HEK293 (cell line): ENCODE measurements at regions of chr17 and their contacts with region 1.

Region 1: GRCh38 chr17:10618202-10618635 is 38.9 kb downstream of the MYH3 start:
- H3K4me3 ChIP-seq: no peak overlapping the region
- H3K27ac ChIP-seq: no peak overlapping the region
- H3K4me1 ChIP-seq: peaks cover 4% of the 10 kb centered on the region; the same call in 1 of the 2 replicates
- CTCF ChIP-seq: peak; percentile 82

Region 2: DNA sequence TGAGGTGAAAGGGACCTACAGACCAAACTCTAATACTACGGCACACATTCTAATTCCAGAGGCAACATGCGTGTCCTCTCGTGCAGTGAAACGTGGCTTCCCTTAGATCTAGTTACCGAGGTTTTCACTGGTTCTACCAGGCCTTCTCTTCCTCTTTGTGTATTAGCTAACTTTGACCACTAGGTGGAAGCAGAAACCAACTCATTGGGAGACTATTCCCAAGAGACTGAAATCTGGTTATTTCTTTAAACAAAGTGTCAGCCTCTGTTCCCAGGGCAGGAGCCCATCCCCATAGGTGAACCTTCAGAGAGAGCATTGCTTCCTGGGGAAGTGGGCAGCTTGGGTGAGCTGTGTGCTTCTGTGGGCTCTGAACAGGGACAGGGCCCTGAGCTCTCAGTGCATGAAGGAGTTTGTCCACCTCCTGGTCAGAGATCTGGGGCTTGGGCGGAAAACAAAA is 693.5 kb before region 1 on chr17:
- CTCF ChIA-PET with region 1: interaction called, 19 read pairs
- POLR2A ChIA-PET with region 1: no interaction called
- H3K4me3 ChIP-seq: no peak overlapping the region
- H3K27ac ChIP-seq: no peak overlapping the region
- H3K4me1 ChIP-seq: peaks cover 6% of the 10 kb centered on the region; the same call in 1 of the 2 replicates
- CTCF ChIP-seq: peak; percentile 69

Region 3: GRCh38 chr17:10295728-10296343 is 322.4 kb before region 1 on chr17:
- CTCF ChIA-PET with region 1: interaction called, 326 read pairs
- POLR2A ChIA-PET with region 1: no interaction called
- H3K4me3 ChIP-seq: no peak overlapping the region
- H3K27ac ChIP-seq: no peak overlapping the region
- H3K4me1 ChIP-seq: no peaks in the 10 kb centered on the region
- CTCF ChIP-seq: peak; percentile 64; the same call in 1 of the 2 replicates

Region 4: GRCh38 chr17:10327640-10328039 is 290.6 kb before region 1 on chr17:
- CTCF ChIA-PET with region 1: interaction called, 473 read pairs
- POLR2A ChIA-PET with region 1: interaction called, 6 read pairs
- H3K4me3 ChIP-seq: no peak overlapping the region
- H3K27ac ChIP-seq: no peak overlapping the region
- H3K4me1 ChIP-seq: no peaks in the 10 kb centered on the region
- CTCF ChIP-seq: peak; percentile 78

Region 5: GRCh38 chr17:10574324-10574723 is 43.9 kb before region 1 on chr17:
- CTCF ChIA-PET with region 1: interaction called, 11 read pairs
- POLR2A ChIA-PET with region 1: no interaction called
- H3K4me3 ChIP-seq: no peak overlapping the region
- H3K27ac ChIP-seq: no peak overlapping the region
- H3K4me1 ChIP-seq: no peaks in the 10 kb centered on the region
- CTCF ChIP-seq: no peak

Region 6: DNA sequence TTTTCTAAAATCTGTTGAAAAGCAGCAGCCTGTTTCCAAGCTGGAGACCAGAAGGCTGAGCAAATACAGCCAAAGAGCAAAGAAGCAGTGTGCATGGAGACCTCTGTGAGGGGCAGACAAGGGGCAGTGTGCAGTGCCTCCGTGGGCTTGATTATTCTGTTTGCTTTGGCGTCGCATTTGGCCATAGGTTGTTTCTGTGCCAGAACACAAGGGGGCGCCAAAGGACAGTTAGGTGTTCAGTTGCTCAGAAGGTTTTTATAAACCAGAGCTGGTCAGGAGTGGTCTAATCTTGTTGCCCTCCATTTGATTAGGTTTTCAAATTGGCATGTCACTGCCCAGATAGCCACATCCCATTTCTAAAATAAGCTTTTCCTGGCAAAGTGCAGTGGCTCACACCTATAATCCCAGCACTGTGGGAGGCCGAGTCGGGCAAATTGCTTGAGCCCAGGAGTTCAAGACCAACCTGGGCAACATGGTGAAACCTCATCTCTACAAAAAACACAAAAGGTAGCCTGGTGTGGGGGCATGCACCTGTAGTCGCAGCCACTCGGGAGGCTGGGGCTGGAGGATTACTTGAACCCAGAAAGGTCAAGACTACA is 28.3 kb after region 1 on chr17:
- CTCF ChIA-PET with region 1: interaction called, 12 read pairs
- POLR2A ChIA-PET with region 1: no interaction called
- H3K4me3 ChIP-seq: no peak overlapping the region
- H3K27ac ChIP-seq: no peak overlapping the region
- H3K4me1 ChIP-seq: no peaks in the 10 kb centered on the region
- CTCF ChIP-seq: 0 out of 2 replicates have a peak, but pooled peaks have one; percentile 41